ENCODE measurements at regions of chr4 and their contacts with region 1.

Region 1: DNA sequence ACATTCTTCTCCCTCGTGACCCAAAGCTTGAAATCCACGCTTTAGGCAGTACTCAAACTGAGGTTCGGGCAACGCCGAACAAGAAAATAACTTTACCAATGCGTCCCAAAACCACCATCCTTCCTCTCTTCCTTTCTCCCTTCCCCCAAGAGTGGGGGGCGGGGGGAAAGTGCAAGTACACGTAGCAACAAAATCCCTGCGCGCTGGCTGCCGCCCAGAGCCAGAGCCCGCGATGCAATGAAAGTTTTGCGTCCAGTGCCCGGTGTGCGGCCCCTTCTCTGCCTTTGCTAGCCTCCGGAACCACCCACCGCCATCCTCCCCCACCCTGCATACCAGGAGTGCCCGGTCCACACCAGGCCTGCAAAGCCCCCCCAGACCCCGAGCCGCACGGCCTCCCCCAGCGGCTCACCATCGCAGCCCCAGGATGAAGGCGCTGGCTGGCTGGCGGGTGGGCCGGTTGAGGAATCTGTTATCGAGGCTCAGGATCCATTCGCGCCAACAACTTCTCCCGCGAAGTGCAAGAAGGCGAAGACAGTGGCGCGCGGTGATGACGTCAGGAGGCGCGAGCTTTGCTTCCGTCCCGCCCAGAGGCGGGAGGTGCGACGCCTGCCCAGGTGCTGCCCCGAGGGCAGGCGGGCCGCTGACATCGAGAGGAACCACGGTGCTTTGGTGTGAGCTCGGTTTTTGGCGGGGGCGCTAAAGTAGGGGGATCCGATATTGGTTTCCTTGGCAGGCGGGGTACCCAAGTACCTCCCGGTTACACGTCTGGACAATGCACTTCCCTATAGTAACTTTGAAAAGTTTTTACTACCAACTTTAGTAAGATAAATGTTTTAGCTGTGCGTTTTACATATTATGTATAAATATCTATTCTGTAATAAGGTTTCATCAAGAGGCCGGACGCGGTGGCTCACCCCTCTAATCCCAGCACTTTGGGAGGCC is at the start of gene RFC1:
- DNase-seq: peak; percentile 94
- H3K4me3 Mint-ChIP-seq: peak within 1 kb of the TSS; percentile 92
- H3K27ac Mint-ChIP-seq: peak within 1 kb of the TSS; percentile 88
- H3K4me1 Mint-ChIP-seq: peaks cover 41% of the 10 kb centered on the region
- H3K27me3 Mint-ChIP-seq: no peaks in the 10 kb centered on the region
- total RNA-seq, gene RFC1: 72.2 to 72.6 TPM

Region 2: DNA sequence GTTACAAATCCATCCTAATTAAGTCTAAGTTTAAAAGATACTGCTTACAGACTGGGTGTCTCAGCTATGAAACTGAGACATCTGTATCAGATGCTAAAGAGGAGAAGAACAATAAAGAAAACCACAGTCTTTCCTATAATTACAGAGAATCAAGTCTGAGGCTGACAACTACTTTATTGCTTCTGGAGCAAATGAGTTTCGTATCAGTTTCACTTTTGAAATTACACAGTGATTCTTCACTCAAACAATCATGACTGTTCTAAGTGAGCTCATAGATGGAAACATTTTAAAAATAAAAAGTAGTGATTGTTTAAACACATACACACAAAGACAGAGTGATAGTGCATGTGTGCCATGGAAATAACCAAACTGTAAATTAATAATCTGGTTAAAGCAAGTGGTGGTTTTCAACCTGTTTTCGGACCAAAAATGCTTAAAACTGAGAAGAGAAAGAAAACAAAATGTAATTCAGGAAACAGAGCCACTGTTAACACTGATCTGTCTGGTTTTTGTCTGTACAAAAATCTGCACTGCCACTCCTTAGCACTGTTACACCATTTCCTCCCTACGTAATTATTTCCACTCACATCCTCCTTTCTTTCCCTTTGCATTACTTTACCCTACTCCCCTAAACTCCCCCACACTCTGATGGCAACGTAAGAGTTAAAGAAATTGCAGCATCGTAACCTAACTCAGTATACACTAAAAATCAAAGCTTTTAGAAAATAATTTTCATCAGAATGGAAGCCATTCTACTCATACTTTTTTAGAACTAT is 12.4 kb before region 1 on chr4:
- CTCF ChIA-PET with region 1: interaction called, 27 read pairs
- POLR2A ChIA-PET with region 1: interaction called, 155 read pairs
- DNase-seq: peak; percentile 24
- H3K4me3 Mint-ChIP-seq: peak overlapping the region; percentile 76
- H3K27ac Mint-ChIP-seq: peak overlapping the region; percentile 98
- H3K4me1 Mint-ChIP-seq: peaks cover 64% of the 10 kb centered on the region
- H3K27me3 Mint-ChIP-seq: no peaks in the 10 kb centered on the region